Activated B cell treated with CpG ODN at 0.5 μM for 24 hours (primary cell): ENCODE measurements at regions of chr6 and their contacts with region 1.

Region 1: DNA sequence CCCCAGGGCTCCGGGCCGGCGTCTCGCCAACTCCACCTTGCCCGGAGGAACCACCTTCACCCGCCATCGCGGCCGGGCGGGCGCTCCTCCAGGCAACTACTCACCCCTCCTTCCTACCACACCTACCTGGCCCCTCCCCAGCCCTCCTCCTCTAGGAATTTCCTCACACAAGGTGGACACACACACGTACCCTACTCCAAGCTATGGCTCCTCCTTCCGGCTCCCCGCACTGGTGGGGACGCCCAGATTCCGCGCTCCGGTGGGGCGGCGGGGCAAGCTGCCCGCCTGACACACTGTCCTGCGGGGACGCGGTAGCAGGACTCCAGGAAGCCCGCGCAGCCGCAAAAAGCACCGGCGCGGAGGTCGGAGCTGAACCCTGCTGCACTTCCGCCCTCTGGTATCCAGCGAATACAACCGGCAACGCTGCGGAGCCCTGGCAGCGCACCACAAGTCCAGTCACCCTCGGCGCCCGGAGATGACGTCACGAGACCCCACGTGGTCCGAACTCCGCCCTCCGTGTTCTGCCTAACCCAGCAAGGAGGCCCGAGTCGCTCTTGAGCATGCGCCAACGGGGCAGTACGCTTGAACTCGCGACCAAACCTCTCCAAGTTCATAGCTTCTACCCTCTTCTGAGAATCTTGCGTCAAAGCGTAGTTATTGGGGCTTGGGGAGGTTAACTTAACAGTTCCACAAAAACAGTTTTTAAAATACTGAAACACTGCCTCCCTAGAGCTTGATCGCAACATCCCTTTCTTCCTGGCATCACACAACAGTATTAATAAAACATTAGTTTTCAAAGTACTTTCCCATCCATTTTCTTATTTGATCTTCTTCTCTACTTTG is at the start of gene ATG5:
- DNase-seq: peak; percentile 99
- ATAC-seq: peak; percentile 93
- H3K4me3 Mint-ChIP-seq: peak within 1 kb of the TSS; percentile 99
- H3K27ac Mint-ChIP-seq: peak within 1 kb of the TSS; percentile 94
- H3K4me1 Mint-ChIP-seq: peaks cover 42% of the 10 kb centered on the region
- H3K27me3 Mint-ChIP-seq: peaks cover 1% of the 10 kb centered on the region
- CTCF ChIP-seq: no peak
- total RNA-seq, gene ATG5: 29.7 and 30.3 TPM in 2 replicates

Region 2: GRCh38 chr6:105402939-105403935 is 922.3 kb before region 1 on chr6 and contains the start of gene PREP:
- CTCF ChIA-PET with region 1: no interaction called
- POLR2A ChIA-PET with region 1: no interaction called
- intact Hi-C with region 1: loop called (anchors 1 kb)
- DNase-seq: peak; percentile 85
- ATAC-seq: peak; percentile 95
- H3K4me3 Mint-ChIP-seq: peak within 1 kb of the TSS; percentile 93
- H3K27ac Mint-ChIP-seq: peak within 1 kb of the TSS; percentile 74
- H3K4me1 Mint-ChIP-seq: peaks cover 37% of the 10 kb centered on the region
- H3K27me3 Mint-ChIP-seq: peaks cover 13% of the 10 kb centered on the region
- CTCF ChIP-seq: peak; percentile 48
- total RNA-seq, gene PREP: 31.1 and 31.3 TPM in 2 replicates

Region 3: DNA sequence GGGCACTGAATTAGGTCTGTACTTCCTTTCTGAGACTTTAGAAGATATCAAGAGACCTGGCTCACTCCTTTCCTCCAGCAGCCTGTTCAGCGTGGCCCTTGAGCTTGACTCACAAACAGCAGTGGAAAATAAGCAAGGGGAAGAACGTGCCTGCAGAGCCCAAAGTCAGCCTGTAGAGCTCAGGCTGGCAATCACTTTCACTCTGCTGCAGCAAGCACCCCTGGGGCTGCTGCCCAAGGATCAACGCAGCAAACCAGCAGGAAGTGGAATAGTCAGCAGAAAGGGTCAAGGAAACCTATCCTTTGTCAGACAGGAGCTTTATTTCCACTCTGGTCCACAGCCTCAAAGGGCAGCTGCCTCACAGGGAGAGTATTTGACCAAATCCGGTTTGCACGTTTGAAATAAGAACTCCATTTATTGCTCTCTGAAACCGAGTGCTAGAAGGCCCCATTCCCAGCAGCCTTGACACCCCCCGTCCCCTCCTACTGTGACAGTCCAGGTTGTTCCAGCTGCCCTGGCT is 162.1 kb before region 1 on chr6:
- CTCF ChIA-PET with region 1: no interaction called
- POLR2A ChIA-PET with region 1: interaction called, 6 read pairs
- intact Hi-C with region 1: loop called (anchors 1 kb)
- DNase-seq: peak; percentile 37
- ATAC-seq: peak; percentile 57
- H3K4me3 Mint-ChIP-seq: peak overlapping the region; percentile 36
- H3K27ac Mint-ChIP-seq: peak overlapping the region; percentile 92
- H3K4me1 Mint-ChIP-seq: peaks cover 35% of the 10 kb centered on the region
- H3K27me3 Mint-ChIP-seq: no peaks in the 10 kb centered on the region
- CTCF ChIP-seq: no peak

Region 4: DNA sequence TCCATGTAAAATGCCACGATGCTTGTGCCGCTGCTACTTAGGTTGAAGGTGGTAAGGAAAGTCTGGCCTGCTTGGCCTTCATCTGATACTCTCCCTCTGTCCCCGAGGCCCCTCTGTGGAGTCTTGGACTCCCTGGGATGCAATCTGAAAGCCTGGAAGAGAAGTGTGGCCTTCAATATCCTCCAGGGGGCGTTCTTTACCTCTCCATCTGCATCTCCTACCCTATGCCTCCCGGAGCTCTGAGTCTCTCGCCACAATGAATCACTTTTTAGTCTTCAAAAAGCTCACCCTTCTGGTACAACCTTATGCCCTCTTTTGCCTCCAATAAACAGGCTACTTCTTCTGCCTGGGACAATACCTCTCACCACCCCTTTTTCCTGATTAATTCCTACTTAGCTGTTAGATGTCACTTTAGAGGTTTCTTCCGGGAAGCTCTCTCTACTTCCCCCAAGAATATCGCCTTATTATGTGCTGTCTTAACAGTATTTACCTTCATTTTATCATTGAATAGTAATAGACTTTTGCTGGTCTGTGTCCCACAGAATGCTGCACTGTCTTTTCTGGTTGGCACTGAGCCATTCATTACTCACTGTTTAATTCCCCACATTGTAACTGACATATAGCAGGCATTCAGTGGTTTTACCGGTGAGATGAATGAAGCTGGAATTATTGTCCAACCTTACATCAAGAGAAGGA is 13.9 kb after region 1 on chr6:
- CTCF ChIA-PET with region 1: interaction called, 10 read pairs
- POLR2A ChIA-PET with region 1: interaction called, 6 read pairs
- intact Hi-C with region 1: no loop called
- DNase-seq: no peak
- ATAC-seq: peak; percentile 79
- H3K4me3 Mint-ChIP-seq: peak overlapping the region; percentile 59
- H3K27ac Mint-ChIP-seq: no peak overlapping the region
- H3K4me1 Mint-ChIP-seq: peaks cover 7% of the 10 kb centered on the region
- H3K27me3 Mint-ChIP-seq: peaks cover 17% of the 10 kb centered on the region
- CTCF ChIP-seq: no peak

Region 5: GRCh38 chr6:106692112-106692818 is 366.7 kb after region 1 on chr6:
- CTCF ChIA-PET with region 1: no interaction called
- POLR2A ChIA-PET with region 1: no interaction called
- intact Hi-C with region 1: loop called (anchors 10 kb)
- DNase-seq: no peak
- ATAC-seq: no peak
- H3K4me3 Mint-ChIP-seq: no peak overlapping the region
- H3K27ac Mint-ChIP-seq: no peak overlapping the region
- H3K4me1 Mint-ChIP-seq: peaks cover 56% of the 10 kb centered on the region
- H3K27me3 Mint-ChIP-seq: no peaks in the 10 kb centered on the region
- CTCF ChIP-seq: no peak

Region 6: GRCh38 chr6:106705156-106705555 is 379.6 kb after region 1 on chr6:
- CTCF ChIA-PET with region 1: no interaction called
- POLR2A ChIA-PET with region 1: no interaction called
- intact Hi-C with region 1: no loop called
- DNase-seq: no peak
- ATAC-seq: no peak
- H3K4me3 Mint-ChIP-seq: no peak overlapping the region
- H3K27ac Mint-ChIP-seq: peak overlapping the region; percentile 98
- H3K4me1 Mint-ChIP-seq: peaks cover 83% of the 10 kb centered on the region
- H3K27me3 Mint-ChIP-seq: no peaks in the 10 kb centered on the region
- CTCF ChIP-seq: no peak